CD8-positive, alpha-beta T cell (primary cell): ENCODE measurements at regions of chr1 and their contacts with region 1.

Region 1: GRCh38 chr1:116139592-116140134 is 28.5 kb downstream of the MAB21L3 start:
- DNase-seq: no peak
- ATAC-seq: no peak
- H3K4me3 ChIP-seq: no peak overlapping the region
- H3K4me3 Mint-ChIP-seq: no peak overlapping the region
- H3K27ac ChIP-seq: no peak overlapping the region
- H3K27ac Mint-ChIP-seq: no peak overlapping the region
- H3K4me1 ChIP-seq: no peaks in the 10 kb centered on the region
- H3K4me1 Mint-ChIP-seq: peaks cover 5% of the 10 kb centered on the region
- H3K27me3 ChIP-seq: no peaks in the 10 kb centered on the region
- H3K27me3 Mint-ChIP-seq: peaks cover 4% of the 10 kb centered on the region
- CTCF ChIP-seq: no peak

Region 2: GRCh38 chr1:116151739-116152576 is 12.3 kb after region 1 on chr1:
- CTCF ChIA-PET with region 1: interaction called, 99 read pairs
- POLR2A ChIA-PET with region 1: interaction called, 15 read pairs
- intact Hi-C with region 1: loop called (anchors 1 to 2 kb)
- DNase-seq: peak; percentile 58 to 93 (median 76)
- ATAC-seq: peak; percentile 91
- H3K4me3 ChIP-seq: peak overlapping the region; percentile 35 to 52
- H3K4me3 Mint-ChIP-seq: peak overlapping the region; percentile 79
- H3K27ac ChIP-seq: peak overlapping the region; percentile 17 to 46
- H3K27ac Mint-ChIP-seq: peak overlapping the region; percentile 92
- H3K4me1 ChIP-seq: peaks cover 26% of the 10 kb centered on the region
- H3K4me1 Mint-ChIP-seq: peaks cover 30% of the 10 kb centered on the region
- H3K27me3 ChIP-seq: no peaks in the 10 kb centered on the region
- H3K27me3 Mint-ChIP-seq: no peaks in the 10 kb centered on the region
- CTCF ChIP-seq: peak; percentile 93

Region 3: GRCh38 chr1:116232989-116233514 is 93.4 kb after region 1 on chr1:
- CTCF ChIA-PET with region 1: interaction called, 14 read pairs
- POLR2A ChIA-PET with region 1: no interaction called
- intact Hi-C with region 1: loop called (anchors 2 to 5 kb)
- DNase-seq: peak in 4 of 9 experiments; percentile 30 to 64 (median 51)
- ATAC-seq: peak; percentile 73
- H3K4me3 ChIP-seq: no peak overlapping the region
- H3K4me3 Mint-ChIP-seq: no peak overlapping the region
- H3K27ac ChIP-seq: no peak overlapping the region
- H3K27ac Mint-ChIP-seq: no peak overlapping the region
- H3K4me1 ChIP-seq: peaks cover 6% of the 10 kb centered on the region
- H3K4me1 Mint-ChIP-seq: peaks cover 11% of the 10 kb centered on the region
- H3K27me3 ChIP-seq: no peaks in the 10 kb centered on the region
- H3K27me3 Mint-ChIP-seq: no peaks in the 10 kb centered on the region
- CTCF ChIP-seq: peak; percentile 45

Region 4: GRCh38 chr1:116372587-116373444 is 233.2 kb after region 1 on chr1 and contains the start of gene ATP1A1:
- CTCF ChIA-PET with region 1: interaction called, 10 read pairs
- POLR2A ChIA-PET with region 1: no interaction called
- intact Hi-C with region 1: loop called in 1 of 2 experiments (anchors 5 kb)
- DNase-seq: peak; percentile 93 to 99 (median 98)
- ATAC-seq: peak; percentile 66
- H3K4me3 ChIP-seq: peak within 1 kb of the TSS; percentile 73 to 80
- H3K4me3 Mint-ChIP-seq: peak within 1 kb of the TSS; percentile 96
- H3K27ac ChIP-seq: peak within 1 kb of the TSS; percentile 83 to 92
- H3K27ac Mint-ChIP-seq: peak within 1 kb of the TSS; percentile 97
- H3K4me1 ChIP-seq: peaks cover 35% of the 10 kb centered on the region
- H3K4me1 Mint-ChIP-seq: peaks cover 47% of the 10 kb centered on the region
- H3K27me3 ChIP-seq: no peaks in the 10 kb centered on the region
- H3K27me3 Mint-ChIP-seq: no peaks in the 10 kb centered on the region
- CTCF ChIP-seq: no peak
- total RNA-seq, gene ATP1A1: 204 to 211 TPM

Region 5: DNA sequence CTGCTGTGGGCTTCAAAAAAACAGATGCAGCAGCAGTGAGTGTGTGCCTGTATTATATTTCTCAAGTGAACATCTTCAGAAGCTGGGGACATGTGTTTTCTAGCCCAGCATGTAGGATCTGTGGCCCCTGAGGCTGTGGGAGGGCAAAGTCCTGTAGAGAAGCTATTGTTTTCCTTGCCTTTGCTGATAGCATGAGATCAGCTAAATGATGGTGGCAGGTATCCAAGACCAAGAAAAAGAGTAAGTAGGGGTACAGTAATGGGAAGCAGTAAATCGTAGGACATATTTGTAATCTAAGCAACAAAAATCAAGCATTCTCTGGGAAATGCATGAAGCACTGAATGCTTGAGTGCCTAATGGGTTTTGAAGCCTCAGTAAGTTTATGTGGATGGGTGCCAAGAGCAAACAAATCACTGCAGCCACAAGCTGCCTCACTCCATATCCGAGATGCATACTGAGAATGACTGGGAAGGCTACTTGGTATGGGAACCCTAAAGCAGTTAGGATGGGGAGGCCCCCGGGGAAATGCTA is 332.8 kb after region 1 on chr1:
- CTCF ChIA-PET with region 1: interaction called, 19 read pairs
- POLR2A ChIA-PET with region 1: no interaction called
- intact Hi-C with region 1: no loop called
- DNase-seq: no peak
- ATAC-seq: no peak
- H3K4me3 ChIP-seq: no peak overlapping the region
- H3K4me3 Mint-ChIP-seq: no peak overlapping the region
- H3K27ac ChIP-seq: no peak overlapping the region
- H3K27ac Mint-ChIP-seq: no peak overlapping the region
- H3K4me1 ChIP-seq: no peaks in the 10 kb centered on the region
- H3K4me1 Mint-ChIP-seq: no peaks in the 10 kb centered on the region
- H3K27me3 ChIP-seq: no peaks in the 10 kb centered on the region
- H3K27me3 Mint-ChIP-seq: no peaks in the 10 kb centered on the region
- CTCF ChIP-seq: no peak

Region 6: GRCh38 chr1:116570358-116571200 is 430.9 kb after region 1 on chr1 and contains the start of gene CD58:
- CTCF ChIA-PET with region 1: interaction called, 5 read pairs
- POLR2A ChIA-PET with region 1: no interaction called
- intact Hi-C with region 1: loop called in 1 of 2 experiments (anchors 2 kb)
- DNase-seq: peak; percentile 53 to 89 (median 76)
- ATAC-seq: peak; percentile 75
- H3K4me3 ChIP-seq: peak within 1 kb of the TSS; percentile 88 to 95
- H3K4me3 Mint-ChIP-seq: peak within 1 kb of the TSS; percentile 92
- H3K27ac ChIP-seq: peak within 1 kb of the TSS; percentile 62 to 89
- H3K27ac Mint-ChIP-seq: peak within 1 kb of the TSS; percentile 92
- H3K4me1 ChIP-seq: peaks cover 3% of the 10 kb centered on the region
- H3K4me1 Mint-ChIP-seq: peaks cover 38% of the 10 kb centered on the region
- H3K27me3 ChIP-seq: no peaks in the 10 kb centered on the region
- H3K27me3 Mint-ChIP-seq: no peaks in the 10 kb centered on the region
- CTCF ChIP-seq: peak; percentile 73
- total RNA-seq, gene CD58: 5.4 to 6.6 TPM

Region 7: GRCh38 chr1:116763787-116764465 is 624.3 kb after region 1 on chr1:
- CTCF ChIA-PET with region 1: no interaction called
- POLR2A ChIA-PET with region 1: no interaction called
- intact Hi-C with region 1: no loop called
- DNase-seq: peak in 4 of 9 experiments; percentile 45 to 74 (median 58)
- ATAC-seq: peak; percentile 10
- H3K4me3 ChIP-seq: peak overlapping the region; percentile 18 to 22
- H3K4me3 Mint-ChIP-seq: peak overlapping the region; percentile 75
- H3K27ac ChIP-seq: peak overlapping the region; percentile 57 to 87
- H3K27ac Mint-ChIP-seq: peak overlapping the region; percentile 96
- H3K4me1 ChIP-seq: peaks cover 96% of the 10 kb centered on the region
- H3K4me1 Mint-ChIP-seq: peaks cover 96% of the 10 kb centered on the region
- H3K27me3 ChIP-seq: no peaks in the 10 kb centered on the region
- H3K27me3 Mint-ChIP-seq: no peaks in the 10 kb centered on the region
- CTCF ChIP-seq: peak; percentile 22